ENCODE measurements at regions of chr19 and their contacts with region 1.

Region 1: GRCh38 chr19:17747205-17748098 is 3.8 kb upstream of the FCHO1 start:
- DNase-seq: peak; percentile 92 to 96 (median 94)
- H3K4me3 ChIP-seq: peak overlapping the region; percentile 54
- H3K4me3 Mint-ChIP-seq: peak overlapping the region; percentile 70 to 98 (median 94)
- H3K27ac ChIP-seq: no peak overlapping the region
- H3K27ac Mint-ChIP-seq: peak overlapping the region; percentile 32 to 92 (median 76)
- H3K4me1 ChIP-seq: peaks cover 36% of the 10 kb centered on the region
- H3K4me1 Mint-ChIP-seq: peaks cover 43 to 53% (median 44%) of the 10 kb centered on the region in 3 donors
- H3K27me3 ChIP-seq: no peaks in the 10 kb centered on the region
- H3K27me3 Mint-ChIP-seq: no peaks in the 10 kb centered on the region

Region 2: DNA sequence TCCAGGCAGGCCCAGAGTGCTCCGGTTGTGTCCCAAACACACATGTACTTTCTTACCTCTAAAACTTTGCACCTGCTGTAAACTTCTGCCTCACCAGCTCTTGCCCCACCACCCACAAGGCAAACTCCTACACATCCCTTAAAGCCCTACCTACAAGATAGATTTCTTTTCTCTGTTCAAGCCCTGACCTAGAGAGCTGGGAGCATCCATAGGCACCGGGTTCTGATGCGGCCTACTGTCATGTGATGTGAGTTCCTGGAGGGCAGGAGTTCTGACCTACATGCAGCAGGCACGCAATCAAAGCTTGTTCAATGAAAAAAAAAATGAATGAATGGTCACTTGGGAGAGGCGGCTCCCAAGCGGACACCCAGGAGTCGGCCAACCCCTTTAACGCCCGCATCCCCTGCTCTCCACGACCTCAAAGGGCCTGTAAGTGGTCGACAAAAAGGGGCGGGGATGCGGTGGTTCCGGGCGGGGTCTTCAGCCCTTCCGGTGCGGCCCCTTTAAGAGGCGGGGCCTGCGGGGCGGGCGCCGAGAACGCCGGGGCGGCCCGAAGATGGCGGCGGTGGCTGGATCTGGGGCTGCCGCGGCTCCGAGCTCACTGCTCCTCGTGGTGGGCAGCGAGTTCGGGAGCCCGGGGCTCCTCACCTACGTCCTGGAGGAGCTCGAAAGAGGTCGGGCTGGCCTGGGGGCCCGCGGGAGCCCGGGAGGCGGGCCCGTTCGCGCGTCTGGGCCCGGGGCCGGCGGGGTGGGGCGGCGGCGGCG is 28.3 kb before region 1 on chr19 and contains the start of gene MAP1S:
- CTCF ChIA-PET with region 1: no interaction called
- POLR2A ChIA-PET with region 1: interaction called, 13 read pairs
- DNase-seq: peak; percentile 46 to 72 (median 54)
- H3K4me3 ChIP-seq: peak within 1 kb of the TSS; percentile 83
- H3K4me3 Mint-ChIP-seq: peak within 1 kb of the TSS; percentile 83 to 94 (median 89)
- H3K27ac ChIP-seq: peak within 1 kb of the TSS; percentile 47
- H3K27ac Mint-ChIP-seq: peak within 1 kb of the TSS; percentile 64 to 98 (median 91)
- H3K4me1 ChIP-seq: peaks cover 32% of the 10 kb centered on the region
- H3K4me1 Mint-ChIP-seq: peaks cover 30 to 44% (median 31%) of the 10 kb centered on the region in 3 donors
- H3K27me3 ChIP-seq: no peaks in the 10 kb centered on the region
- H3K27me3 Mint-ChIP-seq: peaks cover 0 to 2% of the 10 kb centered on the region in 2 donors
- total RNA-seq, gene MAP1S: 66.1 to 72.3 TPM

Measured in CD8-positive, alpha-beta memory T cell (primary cell).